IMR-90 (cell line): ENCODE measurements at regions of chr11 and their contacts with region 1.

Region 1: DNA sequence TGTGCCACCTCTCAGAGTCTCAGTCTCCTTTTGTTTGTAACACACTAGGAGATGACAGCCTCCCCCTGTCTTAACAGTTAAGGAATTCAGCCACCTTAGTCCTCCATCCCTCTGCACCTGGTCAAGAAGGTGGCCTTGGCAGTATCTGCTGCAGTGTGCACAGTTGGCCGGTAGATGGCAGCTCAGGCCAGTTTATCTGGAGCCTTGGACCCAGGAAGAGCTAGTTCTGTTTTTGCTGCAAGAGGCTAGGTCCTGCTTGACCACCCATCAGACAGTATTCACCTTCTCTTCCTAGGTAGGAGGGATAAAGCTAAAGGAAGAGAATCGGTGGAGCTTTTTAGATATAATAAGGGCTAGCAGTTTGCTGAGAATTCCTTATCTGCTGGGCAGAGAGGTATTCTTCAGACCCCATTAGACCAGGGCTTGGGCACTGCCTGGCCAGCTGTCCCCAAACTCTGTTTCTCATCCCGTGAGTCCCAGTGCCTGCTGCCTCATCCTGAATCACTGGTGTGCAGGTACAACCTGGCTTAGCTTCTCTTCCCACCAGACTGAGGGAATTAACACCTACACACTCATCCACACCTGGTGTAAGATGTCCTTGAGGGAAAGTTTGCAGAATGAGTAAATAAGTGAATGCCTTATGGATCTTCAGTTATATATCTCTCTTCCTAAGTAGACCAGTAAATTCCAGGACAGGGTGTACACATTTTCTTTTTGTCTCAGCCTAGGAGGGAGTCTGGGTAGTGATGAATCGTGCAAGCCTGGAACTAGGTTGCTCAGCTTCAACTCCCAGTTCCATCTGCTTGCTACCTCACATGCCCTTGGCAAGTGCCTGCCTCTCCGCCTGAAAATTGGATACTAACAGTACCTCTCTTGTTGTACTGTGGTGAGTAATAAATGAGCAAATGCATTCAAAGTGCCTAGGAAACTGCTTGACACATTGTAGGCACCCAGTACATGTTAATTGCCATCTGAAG is 70.8 kb upstream of the NARS2 start:
- DNase-seq: peak; percentile 72
- ATAC-seq: peak; percentile 95
- H3K4me3 ChIP-seq: no peak overlapping the region
- H3K27ac ChIP-seq: no peak overlapping the region
- H3K4me1 ChIP-seq: peaks cover 7% of the 10 kb centered on the region; the same call in 1 of the 2 replicates
- H3K27me3 ChIP-seq: no peaks in the 10 kb centered on the region
- CTCF ChIP-seq: peak; percentile 90
- POLR2A ChIP-seq: peak; percentile 2; the same call in 1 of the 2 replicates
- RAD21 ChIP-seq: peak; percentile 95

Region 2: GRCh38 chr11:78812513-78813293 is 167.2 kb after region 1 on chr11:
- CTCF ChIA-PET with region 1: no interaction called
- POLR2A ChIA-PET with region 1: no interaction called
- dilution Hi-C with region 1: no loop called
- in situ Hi-C with region 1: no loop called
- intact Hi-C with region 1: loop called (anchors 5 kb)
- DNase-seq: peak; percentile 57
- ATAC-seq: peak; percentile 39
- H3K4me3 ChIP-seq: no peak overlapping the region
- H3K27ac ChIP-seq: peak overlapping the region; percentile 99; the same call in 1 of the 2 replicates
- H3K4me1 ChIP-seq: peaks cover 32% of the 10 kb centered on the region
- H3K27me3 ChIP-seq: no peaks in the 10 kb centered on the region
- CTCF ChIP-seq: peak; percentile 39
- POLR2A ChIP-seq: no peak
- RAD21 ChIP-seq: peak; percentile 25; the same call in 1 of the 2 replicates

Region 3: GRCh38 chr11:79076526-79077115 is 431.1 kb after region 1 on chr11:
- CTCF ChIA-PET with region 1: interaction called, 3 read pairs
- POLR2A ChIA-PET with region 1: no interaction called
- dilution Hi-C with region 1: no loop called
- in situ Hi-C with region 1: no loop called
- intact Hi-C with region 1: loop called (anchors 1 kb)
- DNase-seq: no peak
- ATAC-seq: 0 out of 2 replicates have a peak, but pooled peaks have one; percentile 50
- H3K4me3 ChIP-seq: no peak overlapping the region
- H3K27ac ChIP-seq: no peak overlapping the region
- H3K4me1 ChIP-seq: peaks cover 12% of the 10 kb centered on the region
- H3K27me3 ChIP-seq: no peaks in the 10 kb centered on the region
- CTCF ChIP-seq: peak; percentile 57
- POLR2A ChIP-seq: no peak
- RAD21 ChIP-seq: peak; percentile 52

Region 4: DNA sequence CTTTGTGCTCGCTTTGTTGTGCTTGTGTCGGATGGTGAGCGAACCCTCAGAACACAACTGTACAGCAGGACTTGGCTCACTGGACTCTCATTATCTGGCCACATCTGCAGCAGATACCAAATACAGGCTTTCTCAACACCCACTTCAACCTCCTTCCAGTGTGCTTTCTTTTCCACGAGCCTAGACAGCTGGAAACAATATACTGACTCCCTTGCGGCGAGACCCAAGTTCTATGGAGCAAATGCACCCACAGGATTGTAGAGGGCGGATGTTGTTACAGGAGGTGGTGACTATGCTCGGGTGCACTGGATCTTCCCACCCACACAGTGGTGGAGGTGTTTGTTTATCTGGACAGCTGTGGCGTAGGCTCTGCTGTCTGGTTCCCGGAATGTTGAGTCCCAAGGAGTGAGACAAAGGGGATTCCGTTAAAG is 591.0 kb after region 1 on chr11:
- CTCF ChIA-PET with region 1: no interaction called
- POLR2A ChIA-PET with region 1: no interaction called
- dilution Hi-C with region 1: no loop called
- in situ Hi-C with region 1: no loop called
- intact Hi-C with region 1: loop called (anchors 10 kb)
- DNase-seq: peak; percentile 99
- ATAC-seq: peak; percentile 81
- H3K4me3 ChIP-seq: no peak overlapping the region
- H3K27ac ChIP-seq: peak overlapping the region; percentile 54
- H3K4me1 ChIP-seq: peaks cover 16% of the 10 kb centered on the region
- H3K27me3 ChIP-seq: no peaks in the 10 kb centered on the region
- CTCF ChIP-seq: no peak
- POLR2A ChIP-seq: no peak; the same call in 1 of the 2 replicates
- RAD21 ChIP-seq: no peak

Region 5: GRCh38 chr11:79493555-79494171 is 848.1 kb after region 1 on chr11:
- CTCF ChIA-PET with region 1: interaction called, 5 read pairs
- POLR2A ChIA-PET with region 1: no interaction called
- dilution Hi-C with region 1: no loop called
- in situ Hi-C with region 1: loop called (anchors 10 kb)
- intact Hi-C with region 1: loop called (anchors 1 kb)
- DNase-seq: peak; percentile 62
- ATAC-seq: peak; percentile 99
- H3K4me3 ChIP-seq: no peak overlapping the region
- H3K27ac ChIP-seq: no peak overlapping the region
- H3K4me1 ChIP-seq: no peaks in the 10 kb centered on the region
- H3K27me3 ChIP-seq: peaks cover 12% of the 10 kb centered on the region
- CTCF ChIP-seq: peak; percentile 81
- POLR2A ChIP-seq: no peak
- RAD21 ChIP-seq: peak; percentile 83